Right lobe of liver (tissue), 6 donors: ENCODE measurements at regions of chr13 and their contacts with region 1.

Region 1: DNA sequence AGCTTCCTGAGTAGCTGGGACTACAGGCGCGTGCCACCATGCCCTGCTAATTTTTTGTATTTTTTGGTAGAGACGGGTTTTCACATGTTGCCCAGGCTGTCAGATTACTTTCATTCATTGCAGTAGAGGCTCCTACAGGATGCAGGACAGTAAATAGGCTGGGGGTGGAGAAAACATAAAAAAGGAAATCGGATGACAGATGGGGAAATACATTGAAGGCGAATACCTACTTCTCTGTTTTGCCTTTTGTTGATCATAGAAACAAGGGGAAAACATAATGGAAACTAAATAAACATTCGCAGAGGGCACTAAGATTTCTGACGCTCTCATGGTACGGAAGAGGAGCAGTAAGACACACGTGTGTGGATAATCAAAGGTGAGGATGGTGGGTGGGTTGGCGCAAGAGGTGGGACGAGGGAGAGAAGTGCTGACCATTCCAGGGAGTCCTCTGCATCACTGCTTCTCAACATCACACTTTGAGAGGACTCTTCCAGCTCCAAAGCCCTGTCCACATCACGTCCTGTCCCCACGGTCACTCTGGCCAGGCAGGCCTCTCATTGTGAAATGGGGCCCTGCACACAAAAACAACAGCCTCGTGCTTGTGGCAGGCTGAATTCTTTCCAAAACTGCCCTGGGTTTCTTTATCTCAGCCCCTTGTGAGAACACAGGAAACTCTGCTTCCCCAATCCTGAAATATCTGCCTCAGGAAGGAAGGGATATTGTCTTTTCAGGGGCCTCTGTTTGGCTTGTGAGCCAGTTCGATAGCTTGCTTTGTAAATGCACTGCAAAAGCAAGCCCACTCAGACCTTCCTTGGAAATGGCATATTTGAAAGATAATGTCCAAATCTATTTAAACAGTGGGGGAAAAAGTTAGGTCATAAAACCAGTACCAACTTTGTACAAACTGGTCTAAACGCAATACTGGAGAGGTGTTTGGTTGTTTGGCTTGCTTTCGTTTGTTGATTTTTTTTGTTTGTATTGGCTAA is 188.5 kb downstream of the FOXO1 start:
- DNase-seq: peak; percentile 73 to 81 (median 80)
- ATAC-seq: peak; percentile 64 to 77 (median 72)
- H3K4me3 ChIP-seq: no peak overlapping the region
- H3K27ac ChIP-seq: peak overlapping the region; percentile 73 to 94 (median 90)
- H3K4me1 ChIP-seq: peaks cover 0 to 54% (median 33%) of the 10 kb centered on the region in 4 donors
- H3K27me3 ChIP-seq: no peaks in the 10 kb centered on the region
- CTCF ChIP-seq: no peak
- POLR2A ChIP-seq: peak; percentile 47

Region 2: DNA sequence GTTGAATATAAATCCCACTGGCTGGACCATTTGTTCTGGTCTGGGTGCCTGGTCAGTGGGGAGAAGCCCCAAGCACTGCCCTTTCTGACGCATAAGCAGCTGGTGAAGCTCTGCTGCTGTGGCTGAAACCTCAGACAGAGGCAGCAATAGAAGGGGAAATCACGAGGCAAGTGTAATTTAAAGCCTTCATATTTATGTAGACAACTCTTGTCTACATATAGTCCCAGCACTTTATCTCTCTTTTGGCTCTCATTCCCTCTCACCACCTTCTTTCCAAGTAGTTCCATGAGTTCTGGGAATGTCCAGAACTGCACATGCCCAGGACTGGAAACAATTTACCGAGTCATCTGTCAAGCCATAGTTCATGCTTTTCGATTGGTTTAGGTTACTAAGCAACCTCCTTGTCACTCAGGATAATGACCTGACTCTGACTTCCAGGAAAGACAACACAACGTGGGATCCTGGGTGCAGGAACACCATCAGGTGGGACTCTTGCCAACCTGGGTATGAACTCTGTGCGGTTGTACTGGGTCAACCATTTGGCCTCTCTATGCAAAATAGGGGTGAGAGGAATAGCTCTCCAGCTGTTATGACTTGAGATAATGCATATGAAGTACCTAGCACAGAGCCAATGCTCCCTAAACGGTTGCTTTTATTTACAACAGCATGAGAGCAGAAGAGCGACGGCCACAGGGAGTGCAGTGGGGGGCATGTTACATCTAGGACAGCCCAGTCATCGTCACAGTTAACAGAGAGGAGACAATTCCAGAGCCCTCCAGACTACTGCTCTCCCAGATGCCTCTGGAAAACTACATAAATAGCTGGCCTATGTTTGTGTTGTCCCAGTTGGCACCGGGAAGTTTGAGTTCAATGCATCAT is 133.4 kb before region 1 on chr13:
- intact Hi-C with region 1: loop called in 1 of 2 experiments (anchors 10 kb)
- DNase-seq: peak; percentile 65 to 93 (median 83)
- ATAC-seq: peak; percentile 58 to 84 (median 73)
- H3K4me3 ChIP-seq: peak overlapping the region in 2 of 3 donors; percentile 14 to 17
- H3K27ac ChIP-seq: peak overlapping the region; percentile 59 to 100 (median 96)
- H3K4me1 ChIP-seq: peaks cover 0 to 52% (median 19%) of the 10 kb centered on the region in 4 donors
- H3K27me3 ChIP-seq: no peaks in the 10 kb centered on the region
- CTCF ChIP-seq: no peak
- POLR2A ChIP-seq: peak; percentile 28